PC-9 (cell line): ENCODE measurements at regions of chr17 and their contacts with region 1.

Region 1: DNA sequence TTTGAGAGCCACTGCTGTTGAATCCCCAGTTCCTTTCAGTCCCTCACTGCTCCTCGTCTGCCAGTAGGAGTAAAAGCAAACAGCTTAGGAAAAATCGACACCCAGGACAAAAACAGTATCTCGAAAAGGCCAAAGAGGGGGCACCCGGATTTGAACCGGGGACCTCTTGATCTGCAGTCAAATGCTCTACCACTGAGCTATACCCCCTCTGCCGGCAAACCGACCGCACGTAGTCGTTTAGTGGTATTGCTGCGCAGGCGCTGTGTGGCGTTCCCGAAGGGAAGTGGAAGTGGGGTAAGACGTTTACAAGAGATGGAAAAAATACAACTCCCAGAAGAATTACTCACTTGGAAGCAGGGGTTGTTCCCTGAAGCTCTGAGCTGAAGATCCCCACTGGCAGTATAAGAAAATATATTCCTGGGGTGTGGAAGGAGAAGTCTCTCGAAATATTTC is 2.2 kb upstream of the PLXDC1 start:
- DNase-seq: peak; percentile 79 to 85
- H3K4me3 ChIP-seq: peak overlapping the region; percentile 73
- H3K27ac ChIP-seq: no peak overlapping the region
- H3K4me1 ChIP-seq: peaks cover 8% of the 10 kb centered on the region
- H3K27me3 ChIP-seq: no peaks in the 10 kb centered on the region
- CTCF ChIP-seq: no peak

Region 2: DNA sequence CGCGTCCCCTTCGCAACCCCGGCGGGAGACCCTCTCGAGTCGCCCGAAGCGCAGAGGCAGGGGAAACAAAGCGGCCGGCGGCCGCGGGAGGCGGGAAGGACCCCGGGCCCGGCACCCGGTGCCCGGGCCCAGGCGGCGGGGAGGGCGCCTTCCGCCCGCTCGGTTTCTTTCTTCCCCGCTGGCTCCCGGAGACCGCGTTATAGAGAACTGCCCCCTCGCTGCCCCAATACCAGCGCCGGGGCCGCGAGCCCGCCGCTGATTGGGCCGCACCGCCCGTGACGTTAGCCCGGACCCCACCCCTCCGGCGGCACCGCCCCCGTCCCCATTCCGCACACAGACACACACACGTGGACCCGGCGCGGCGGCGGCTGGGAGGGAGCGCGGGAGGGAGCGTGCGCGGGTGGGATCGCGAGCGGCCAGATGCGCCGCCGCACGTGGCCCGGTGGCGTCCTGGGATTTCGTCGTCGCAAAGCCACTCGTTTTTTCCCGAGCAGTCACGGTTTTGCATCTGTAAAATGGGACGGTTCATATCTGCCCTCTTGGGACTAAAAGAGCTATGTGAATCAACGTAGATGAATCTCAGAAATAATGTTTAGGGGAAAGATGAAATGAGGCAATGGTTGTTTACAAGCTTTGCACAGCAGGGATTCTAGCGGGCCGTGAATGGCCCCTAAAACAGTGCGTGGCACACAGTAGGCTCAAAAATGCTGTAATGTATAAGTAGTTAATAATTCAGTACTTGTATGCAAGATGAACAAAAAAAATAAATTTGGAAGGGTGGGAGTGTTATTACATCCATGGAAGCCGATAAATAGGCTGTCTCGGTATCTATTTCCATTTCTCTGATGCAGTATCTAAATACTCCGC is 478.6 kb before region 1 on chr17 and contains the start of gene EPOP:
- CTCF ChIA-PET with region 1: no interaction called
- POLR2A ChIA-PET with region 1: no interaction called
- intact Hi-C with region 1: loop called (anchors 5 kb)
- DNase-seq: peak; percentile 62 to 89
- H3K4me3 ChIP-seq: peak within 1 kb of the TSS; percentile 95
- H3K27ac ChIP-seq: no peak within 1 kb of the TSS
- H3K4me1 ChIP-seq: peaks cover 23% of the 10 kb centered on the region
- H3K27me3 ChIP-seq: no peaks in the 10 kb centered on the region
- CTCF ChIP-seq: no peak; the same call in 1 of the 2 replicates
- total RNA-seq, gene EPOP: 8.4 and 10.6 TPM in 2 replicates

Region 3: GRCh38 chr17:38752119-38752929 is 401.3 kb before region 1 on chr17 and contains the start of gene PSMB3:
- CTCF ChIA-PET with region 1: no interaction called
- POLR2A ChIA-PET with region 1: interaction called, 8 read pairs
- intact Hi-C with region 1: loop called (anchors 2 kb)
- DNase-seq: peak; percentile 95 to 99
- H3K4me3 ChIP-seq: peak within 1 kb of the TSS; percentile 92
- H3K27ac ChIP-seq: peak within 1 kb of the TSS; percentile 79
- H3K4me1 ChIP-seq: peaks cover 10% of the 10 kb centered on the region
- H3K27me3 ChIP-seq: no peaks in the 10 kb centered on the region
- CTCF ChIP-seq: no peak
- total RNA-seq, gene PSMB3: 262 and 278 TPM in 2 replicates

Region 4: DNA sequence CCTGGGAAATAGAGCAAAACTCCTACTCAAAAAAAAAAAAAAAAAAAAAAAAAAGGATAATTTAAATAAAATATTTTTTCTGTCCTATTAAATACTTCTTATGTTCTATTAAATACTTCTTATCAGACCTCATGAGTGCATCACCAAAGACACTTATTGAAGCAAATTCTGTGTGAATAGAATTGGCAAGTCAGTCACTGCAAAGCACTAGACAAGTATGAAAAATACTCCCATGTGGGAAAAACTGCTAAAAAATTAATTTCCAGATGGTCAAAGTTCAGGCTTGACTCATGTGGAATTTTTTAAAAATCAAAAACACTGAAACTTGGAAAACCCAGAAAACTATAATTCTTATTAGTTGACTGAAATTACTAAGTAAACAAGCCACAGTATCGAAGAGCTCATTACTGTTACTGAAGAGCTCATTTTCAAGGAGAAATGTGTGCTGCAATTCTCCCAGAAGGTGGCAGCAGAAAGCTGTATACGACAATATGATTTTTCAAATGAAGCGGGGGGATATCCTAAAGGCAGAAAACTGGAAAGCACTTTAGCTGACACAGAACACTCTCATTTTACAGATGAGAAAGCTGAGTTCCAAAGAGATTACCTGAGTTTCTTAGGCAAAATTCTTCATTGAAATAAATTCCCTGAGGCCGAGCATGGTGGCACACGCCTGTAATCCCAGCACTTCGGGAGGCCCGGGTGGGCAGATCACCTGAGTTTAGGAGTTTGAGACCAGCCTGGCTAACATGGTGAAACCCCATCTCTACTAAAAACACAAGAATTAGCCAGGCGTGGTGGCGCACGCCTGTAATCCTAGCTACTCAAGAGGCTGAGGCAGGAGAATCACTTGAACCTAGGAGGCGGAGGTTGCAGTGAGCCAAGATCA is 170.5 kb before region 1 on chr17:
- CTCF ChIA-PET with region 1: interaction called, 62 read pairs
- POLR2A ChIA-PET with region 1: interaction called, 4 read pairs
- intact Hi-C with region 1: loop called (anchors 1 kb)
- DNase-seq: peak; percentile 34 to 51
- H3K4me3 ChIP-seq: no peak overlapping the region
- H3K27ac ChIP-seq: no peak overlapping the region
- H3K4me1 ChIP-seq: no peaks in the 10 kb centered on the region
- H3K27me3 ChIP-seq: no peaks in the 10 kb centered on the region
- CTCF ChIP-seq: peak; percentile 86

Region 5: GRCh38 chr17:39069114-39069756 is 84.4 kb before region 1 on chr17:
- CTCF ChIA-PET with region 1: no interaction called
- POLR2A ChIA-PET with region 1: no interaction called
- intact Hi-C with region 1: loop called (anchors 1 kb)
- DNase-seq: peak in 1 of 2 experiments; percentile 35
- H3K4me3 ChIP-seq: no peak overlapping the region
- H3K27ac ChIP-seq: no peak overlapping the region
- H3K4me1 ChIP-seq: no peaks in the 10 kb centered on the region
- H3K27me3 ChIP-seq: no peaks in the 10 kb centered on the region
- CTCF ChIP-seq: peak; percentile 73